Mammary epithelial cell (primary cell): ENCODE measurements at regions of chr11 and their contacts with region 1.

Region 1: DNA sequence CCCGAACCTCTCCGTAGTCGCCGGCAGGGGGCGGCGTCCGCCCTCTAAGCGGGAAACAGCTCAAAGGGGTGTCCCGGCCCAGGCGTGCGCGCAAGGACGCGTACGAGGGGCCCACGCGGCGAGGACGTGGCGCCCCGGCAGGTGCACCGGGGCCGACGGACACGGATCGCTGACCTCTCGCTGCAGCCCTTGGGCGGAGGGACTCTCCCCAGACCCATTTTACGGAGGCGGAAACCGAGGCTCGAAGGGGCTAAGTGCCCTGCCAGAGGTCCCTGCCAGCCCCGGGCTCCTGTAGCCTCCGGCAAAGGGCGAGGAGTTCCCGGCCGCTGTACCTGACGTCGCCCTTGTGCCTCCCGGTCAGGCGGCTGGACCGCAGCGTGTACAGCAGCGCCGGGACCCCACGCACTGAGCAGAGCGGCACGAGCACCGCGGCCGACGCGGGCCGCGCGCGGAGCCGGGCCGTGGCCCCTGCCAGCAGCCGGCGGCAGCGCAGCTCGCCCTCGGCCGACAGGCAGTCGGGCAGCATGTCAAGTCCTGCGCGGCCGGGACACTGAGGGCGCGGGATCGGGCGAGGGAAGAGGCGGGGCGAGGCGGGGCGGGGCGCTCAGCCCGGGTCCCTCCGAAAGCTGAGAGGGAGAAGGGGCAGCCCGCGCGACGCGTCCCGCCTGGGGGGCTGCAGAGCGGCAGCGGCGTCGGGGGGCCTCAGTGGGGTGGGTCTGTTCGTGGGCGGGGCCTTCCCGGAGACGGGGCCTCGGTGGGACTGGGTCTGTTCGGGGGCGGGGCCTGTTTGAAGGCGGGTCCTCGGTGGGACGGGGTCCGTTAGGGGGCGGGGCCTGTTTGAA is at the start of gene NUDT8:
- DNase-seq: peak; percentile 77
- H3K4me3 ChIP-seq: peak within 1 kb of the TSS; percentile 75 to 86 (median 81)
- H3K27ac ChIP-seq: peak within 1 kb of the TSS; percentile 36
- H3K4me1 ChIP-seq: peaks cover 20% of the 10 kb centered on the region
- H3K27me3 ChIP-seq: no peaks in the 10 kb centered on the region
- CTCF ChIP-seq: peak; percentile 68 to 87
- total RNA-seq, gene NUDT8: 4.2 to 13.4 TPM

Region 2: DNA sequence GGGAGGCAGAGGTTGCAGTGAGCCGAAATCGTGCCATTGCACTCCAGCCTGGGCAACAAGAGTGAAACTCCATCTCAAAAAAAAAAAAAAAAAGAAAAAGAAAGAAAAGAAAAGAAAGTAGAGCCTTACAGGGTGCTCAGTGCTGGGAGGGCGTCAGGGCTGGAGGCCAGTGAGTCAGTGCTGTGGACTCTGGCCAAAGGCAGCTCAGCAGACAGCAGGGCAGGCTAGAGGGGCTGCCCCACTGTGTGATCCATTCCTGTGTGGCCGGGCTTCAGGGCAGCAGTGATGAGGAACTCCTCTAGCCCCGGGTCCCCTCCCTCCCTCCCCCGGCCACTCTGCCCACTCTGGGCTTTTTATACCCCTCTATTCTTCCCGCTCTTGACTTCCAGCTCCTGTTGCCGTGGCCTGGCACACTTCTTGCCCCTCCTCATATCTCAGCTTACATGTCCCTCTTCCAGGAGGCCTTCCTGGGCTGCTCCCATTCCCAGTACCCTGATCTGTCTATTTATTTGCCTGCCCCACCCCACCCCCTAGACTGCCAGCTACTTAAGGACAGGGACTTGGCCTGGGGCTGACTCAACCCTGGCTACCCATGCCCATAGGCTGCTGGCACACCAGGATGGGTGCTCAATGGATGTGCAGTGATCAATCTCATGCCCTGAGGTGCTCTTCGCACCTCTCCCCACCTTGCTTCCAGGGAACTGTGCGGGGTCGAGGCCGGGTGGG is 596.6 kb before region 1 on chr11:
- CTCF ChIA-PET with region 1: interaction called, 11 read pairs
- dilution Hi-C with region 1: no loop called
- in situ Hi-C with region 1: no loop called
- intact Hi-C with region 1: no loop called
- DNase-seq: peak; percentile 79
- H3K4me3 ChIP-seq: no peak overlapping the region
- H3K27ac ChIP-seq: peak overlapping the region; percentile 56
- H3K4me1 ChIP-seq: peaks cover 34% of the 10 kb centered on the region
- H3K27me3 ChIP-seq: no peaks in the 10 kb centered on the region
- CTCF ChIP-seq: no peak

Region 3: DNA sequence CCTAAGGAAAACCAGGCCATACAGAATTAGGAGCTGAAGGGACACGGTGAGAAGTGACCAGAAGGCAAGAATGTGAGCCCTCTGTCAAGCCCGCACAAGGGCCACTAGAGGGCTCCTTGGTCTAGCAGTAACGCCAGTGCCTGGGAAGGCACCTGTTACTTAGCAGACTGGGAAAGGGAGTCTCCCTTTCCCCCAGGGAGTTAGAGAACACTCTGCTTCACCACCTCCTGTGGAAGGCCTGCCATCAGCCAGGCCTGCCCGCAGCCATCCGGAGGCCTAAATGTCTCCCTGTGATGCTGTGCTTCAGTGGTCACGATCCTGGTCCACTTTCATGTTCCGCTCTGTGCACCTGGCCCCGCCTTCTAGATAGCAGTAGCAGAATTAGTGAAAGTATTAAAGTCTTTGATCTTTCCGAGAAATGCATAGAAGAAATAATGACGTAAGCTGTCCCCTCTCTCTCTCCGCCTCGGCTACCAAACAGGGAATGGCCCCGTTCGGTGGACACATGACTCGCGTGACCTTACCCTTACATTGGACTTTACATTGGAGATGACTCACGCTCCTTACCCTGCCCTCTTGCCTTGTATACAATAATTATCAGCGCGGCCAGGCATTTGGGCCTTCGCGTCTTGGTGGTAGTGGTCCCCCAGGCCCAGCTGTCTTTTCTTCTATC is 56.7 kb before region 1 on chr11:
- CTCF ChIA-PET with region 1: no interaction called
- dilution Hi-C with region 1: no loop called
- in situ Hi-C with region 1: no loop called
- intact Hi-C with region 1: loop called (anchors 2 kb)
- DNase-seq: peak; percentile 50
- H3K4me3 ChIP-seq: no peak overlapping the region
- H3K27ac ChIP-seq: no peak overlapping the region
- H3K4me1 ChIP-seq: no peaks in the 10 kb centered on the region
- H3K27me3 ChIP-seq: no peaks in the 10 kb centered on the region
- CTCF ChIP-seq: peak; percentile 58 to 84

Region 4: GRCh38 chr11:67656278-67656922 is 26.8 kb after region 1 on chr11:
- CTCF ChIA-PET with region 1: interaction called, 7 read pairs
- dilution Hi-C with region 1: loop called (anchors 5 kb)
- in situ Hi-C with region 1: no loop called
- intact Hi-C with region 1: loop called (anchors 1 kb)
- DNase-seq: peak; percentile 83
- H3K4me3 ChIP-seq: no peak overlapping the region
- H3K27ac ChIP-seq: peak overlapping the region; percentile 71
- H3K4me1 ChIP-seq: peaks cover 29% of the 10 kb centered on the region
- H3K27me3 ChIP-seq: no peaks in the 10 kb centered on the region
- CTCF ChIP-seq: no peak

Region 5: DNA sequence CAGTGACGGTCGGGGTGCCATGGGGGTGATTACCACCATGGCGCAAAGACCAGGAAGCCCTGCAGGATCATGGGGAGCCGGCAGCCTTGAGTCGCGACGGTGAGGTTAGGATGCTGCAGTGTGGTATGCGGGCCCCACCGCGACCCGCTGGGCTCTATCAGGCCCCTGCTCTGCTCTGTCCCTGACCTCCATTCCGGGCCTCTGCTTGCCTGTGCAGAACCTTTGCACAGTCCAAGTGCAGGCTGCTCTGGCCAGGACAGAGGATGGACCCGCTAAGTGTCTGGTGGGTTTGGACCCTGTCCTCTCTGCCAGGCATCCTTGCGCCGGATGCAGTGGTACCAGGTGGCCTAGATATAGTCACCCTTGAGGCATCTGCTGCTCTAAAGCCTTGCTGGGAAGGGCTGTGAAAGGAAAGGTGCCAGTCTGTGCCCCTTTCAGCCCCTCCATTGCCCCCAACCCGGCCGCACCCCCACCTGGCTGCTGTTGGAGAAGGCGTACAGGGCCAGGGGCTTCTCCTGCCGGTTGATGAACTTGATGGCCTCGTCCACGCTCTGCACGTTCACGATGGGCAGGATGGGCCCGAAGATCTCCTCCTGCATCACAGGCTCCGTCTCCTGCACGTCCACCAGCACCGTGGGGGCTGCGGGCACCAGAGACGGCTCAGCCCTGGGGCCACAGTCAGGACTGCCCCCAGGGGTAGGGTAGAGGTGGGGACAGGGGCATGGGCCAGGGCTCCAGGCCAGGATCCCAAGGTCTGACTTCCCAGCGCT is 34.5 kb after region 1 on chr11:
- CTCF ChIA-PET with region 1: interaction called, 7 read pairs
- dilution Hi-C with region 1: loop called (anchors 5 kb)
- in situ Hi-C with region 1: no loop called
- intact Hi-C with region 1: loop called (anchors 1 kb)
- DNase-seq: no peak
- H3K4me3 ChIP-seq: no peak overlapping the region
- H3K27ac ChIP-seq: no peak overlapping the region
- H3K4me1 ChIP-seq: no peaks in the 10 kb centered on the region
- H3K27me3 ChIP-seq: no peaks in the 10 kb centered on the region
- CTCF ChIP-seq: no peak

Region 6: DNA sequence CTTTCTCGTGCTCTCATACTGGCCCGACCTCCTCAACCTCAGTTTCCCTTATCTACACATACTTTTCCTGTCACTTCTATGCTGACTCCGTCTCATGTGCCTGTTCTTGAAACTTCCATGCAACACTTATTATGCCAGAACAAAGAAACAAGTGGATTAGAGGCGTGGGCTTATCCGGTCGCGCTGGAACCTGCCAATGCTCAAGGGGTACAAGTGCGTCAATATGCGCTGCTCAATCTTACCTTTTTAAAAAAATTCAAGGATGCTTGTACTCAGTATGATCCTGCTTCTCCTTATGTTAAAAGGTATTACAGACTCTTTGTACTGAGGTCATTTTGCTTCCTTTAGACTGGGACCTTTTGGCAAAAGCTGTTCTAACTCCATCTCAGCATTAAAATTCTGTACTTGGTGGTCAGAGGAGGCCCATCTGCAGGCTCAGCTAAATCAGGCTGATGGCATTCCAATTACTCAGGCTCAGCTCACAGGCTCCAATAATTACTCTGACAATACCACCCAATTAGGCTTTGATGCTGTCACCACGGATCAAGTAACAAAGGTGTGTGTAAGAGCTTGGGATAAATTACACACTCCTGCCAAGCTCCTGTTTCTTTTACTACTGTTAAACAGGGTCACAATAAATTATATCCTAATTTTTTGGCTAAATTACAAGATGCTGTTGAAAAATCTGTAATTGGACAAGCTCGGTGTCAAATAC is 71.1 kb after region 1 on chr11:
- CTCF ChIA-PET with region 1: no interaction called
- dilution Hi-C with region 1: no loop called
- in situ Hi-C with region 1: no loop called
- intact Hi-C with region 1: loop called (anchors 5 kb)
- DNase-seq: no peak
- H3K4me3 ChIP-seq: no peak overlapping the region
- H3K27ac ChIP-seq: no peak overlapping the region
- H3K4me1 ChIP-seq: peaks cover 16% of the 10 kb centered on the region
- H3K27me3 ChIP-seq: no peaks in the 10 kb centered on the region
- CTCF ChIP-seq: no peak